Activated CD4-positive, alpha-beta T cell treated with anti-CD3 and anti-CD28 coated beads for 36 hours (primary cell): ENCODE measurements at regions of chr19 and their contacts with region 1.

Region 1: DNA sequence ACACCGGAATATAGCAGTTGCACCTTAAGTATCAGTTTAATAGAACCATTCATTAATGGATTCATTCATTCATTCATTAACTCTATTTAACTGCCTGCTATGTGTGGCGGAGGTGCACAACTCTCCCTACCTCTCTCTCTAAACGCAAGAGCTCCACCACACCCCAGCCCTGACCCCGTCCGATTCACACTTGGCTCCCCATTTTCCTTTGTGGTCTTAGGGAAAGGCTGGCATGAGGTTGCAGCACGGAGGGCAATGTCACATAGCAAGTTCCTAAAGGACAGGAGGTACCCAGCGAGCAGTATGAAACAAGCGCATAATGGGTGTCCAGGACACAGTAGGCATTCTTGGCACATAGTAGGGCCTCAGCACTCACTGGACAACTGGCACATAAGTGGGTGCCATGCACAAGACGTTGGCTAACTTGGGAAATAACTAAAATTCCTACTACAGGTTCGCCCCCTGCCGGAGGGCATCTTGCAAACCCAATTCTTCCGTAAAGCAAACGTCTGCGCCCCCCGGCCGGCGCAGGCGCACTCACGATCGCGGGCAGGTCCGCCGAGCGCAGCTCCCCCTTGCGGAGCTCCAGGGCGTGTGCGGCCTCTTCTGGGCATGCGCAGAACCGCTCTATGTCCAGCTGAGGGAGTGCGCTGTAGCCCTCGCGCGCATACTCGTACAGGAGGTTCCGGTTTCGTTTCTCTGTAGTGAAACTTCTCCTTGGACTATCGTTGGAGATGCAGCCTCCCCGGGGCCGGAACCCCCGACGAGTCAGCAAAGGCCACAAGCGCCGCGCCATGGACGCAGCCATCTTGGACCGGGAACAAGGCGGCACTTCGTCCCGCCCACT is at the start of gene SARS2:
- DNase-seq: peak; percentile 95
- ATAC-seq: peak; percentile 69
- H3K4me3 Mint-ChIP-seq: peak within 1 kb of the TSS; percentile 81
- H3K27ac Mint-ChIP-seq: peak within 1 kb of the TSS; percentile 92
- H3K4me1 Mint-ChIP-seq: peaks cover 28% of the 10 kb centered on the region
- H3K27me3 Mint-ChIP-seq: no peaks in the 10 kb centered on the region
- total RNA-seq, gene SARS2: 36.7 to 39.4 TPM

Region 2: DNA sequence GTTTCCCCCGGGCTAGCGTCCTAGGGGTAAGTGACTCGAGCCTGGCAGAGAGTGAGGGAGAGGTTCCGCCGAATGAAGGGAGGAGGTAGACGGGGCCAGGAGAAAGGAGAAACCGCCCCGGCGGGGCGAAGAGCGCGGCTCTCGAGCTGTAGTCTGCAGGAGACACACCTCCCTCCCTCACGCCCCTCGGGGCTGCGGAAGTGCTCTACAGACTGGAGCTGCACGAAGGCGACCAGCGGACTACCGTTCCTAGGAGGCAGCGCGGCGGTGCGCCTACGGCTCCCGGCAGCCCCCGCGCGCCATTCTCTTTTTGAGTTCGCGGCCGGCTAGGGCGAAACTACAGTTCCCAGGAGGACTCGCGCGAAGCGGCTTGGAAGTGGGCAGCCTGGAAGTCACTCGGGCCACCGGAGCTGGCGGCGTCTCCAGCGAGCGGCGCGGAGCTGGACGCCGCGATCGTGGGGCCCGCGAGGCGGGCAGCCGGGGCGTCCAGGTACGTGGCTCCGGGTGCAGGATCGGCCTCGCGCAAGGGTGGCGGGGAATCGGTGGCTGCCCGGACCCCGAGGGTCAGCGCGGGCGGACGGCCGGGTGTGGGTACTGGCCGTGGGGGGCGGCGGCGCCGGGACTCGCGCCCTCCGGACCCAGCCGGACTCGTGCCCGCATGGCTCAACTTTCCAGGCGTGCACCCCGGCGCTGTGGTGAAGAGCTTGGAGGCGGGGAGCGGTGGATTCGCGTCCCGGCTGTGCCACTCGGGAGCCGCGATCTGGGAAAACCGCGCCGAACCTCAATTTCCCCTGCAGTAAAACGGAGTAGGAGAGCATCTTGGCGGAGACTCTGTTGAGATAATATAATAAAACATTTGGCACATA is 1023.0 kb before region 1 on chr19 and contains the start of gene SIPA1L3:
- CTCF ChIA-PET with region 1: no interaction called
- POLR2A ChIA-PET with region 1: no interaction called
- intact Hi-C with region 1: loop called in 1 of 2 experiments (anchors 1 kb)
- DNase-seq: peak; percentile 97
- ATAC-seq: peak; percentile 98
- H3K4me3 Mint-ChIP-seq: peak within 1 kb of the TSS; percentile 73
- H3K27ac Mint-ChIP-seq: peak within 1 kb of the TSS; percentile 74
- H3K4me1 Mint-ChIP-seq: peaks cover 20% of the 10 kb centered on the region
- H3K27me3 Mint-ChIP-seq: no peaks in the 10 kb centered on the region
- total RNA-seq, gene SIPA1L3: 10.5 to 18.3 TPM

Region 3: GRCh38 chr19:38514812-38515633 is 415.1 kb before region 1 on chr19:
- CTCF ChIA-PET with region 1: interaction called, 3 read pairs
- POLR2A ChIA-PET with region 1: no interaction called
- intact Hi-C with region 1: loop called in 1 of 2 experiments (anchors 1 kb)
- DNase-seq: peak; percentile 88
- ATAC-seq: peak; percentile 96
- H3K4me3 Mint-ChIP-seq: no peak overlapping the region
- H3K27ac Mint-ChIP-seq: peak overlapping the region; percentile 42
- H3K4me1 Mint-ChIP-seq: peaks cover 16% of the 10 kb centered on the region
- H3K27me3 Mint-ChIP-seq: no peaks in the 10 kb centered on the region

Region 4: GRCh38 chr19:38707512-38708114 is 222.5 kb before region 1 on chr19:
- CTCF ChIA-PET with region 1: no interaction called
- POLR2A ChIA-PET with region 1: no interaction called
- intact Hi-C with region 1: no loop called
- DNase-seq: no peak
- ATAC-seq: no peak
- H3K4me3 Mint-ChIP-seq: no peak overlapping the region
- H3K27ac Mint-ChIP-seq: no peak overlapping the region
- H3K4me1 Mint-ChIP-seq: no peaks in the 10 kb centered on the region
- H3K27me3 Mint-ChIP-seq: no peaks in the 10 kb centered on the region

Region 5: DNA sequence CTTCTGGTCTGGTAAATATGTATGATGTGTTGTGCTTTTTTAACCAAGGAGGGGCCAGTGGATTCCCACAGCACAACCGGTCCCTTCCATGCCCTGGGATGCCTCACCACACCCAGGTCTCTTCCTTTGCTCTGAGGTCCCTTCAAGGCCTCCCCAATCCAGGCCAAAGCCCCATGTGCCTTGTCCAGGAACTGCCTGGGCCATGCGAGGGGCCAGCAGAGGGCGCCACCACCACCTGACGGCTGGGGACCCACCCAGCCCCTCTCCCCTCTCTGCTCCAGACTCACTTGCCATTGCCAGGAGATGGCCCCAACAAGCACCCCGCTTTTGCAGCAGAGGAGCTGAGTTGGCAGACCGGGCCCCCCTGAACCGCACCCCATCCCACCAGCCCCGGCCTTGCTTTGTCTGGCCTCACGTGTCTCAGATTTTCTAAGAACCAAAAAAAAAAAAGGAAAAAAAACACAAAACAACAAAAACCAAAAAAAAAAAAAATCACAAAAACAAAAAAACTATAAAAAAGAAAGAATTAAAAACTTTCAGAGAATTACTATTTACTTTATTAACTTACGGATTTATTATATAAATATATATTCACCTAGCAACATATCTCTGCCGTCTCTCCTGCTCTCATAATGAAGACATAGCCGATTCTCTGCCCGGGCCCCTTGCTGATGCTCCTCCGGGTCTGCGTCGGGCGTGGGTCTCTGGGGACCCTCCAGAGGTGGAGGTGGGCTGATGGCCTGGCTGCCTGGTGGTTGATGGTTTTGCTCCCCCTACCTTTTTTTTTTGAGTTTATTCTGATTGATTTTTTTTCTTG is 200.3 kb before region 1 on chr19:
- CTCF ChIA-PET with region 1: interaction called, 10 read pairs
- POLR2A ChIA-PET with region 1: no interaction called
- intact Hi-C with region 1: loop called (anchors 1 to 5 kb)
- DNase-seq: peak; percentile 92
- ATAC-seq: peak; percentile 82
- H3K4me3 Mint-ChIP-seq: no peak overlapping the region
- H3K27ac Mint-ChIP-seq: peak overlapping the region; percentile 60
- H3K4me1 Mint-ChIP-seq: peaks cover 18% of the 10 kb centered on the region
- H3K27me3 Mint-ChIP-seq: no peaks in the 10 kb centered on the region

Region 6: GRCh38 chr19:38869856-38870607 is 60.1 kb before region 1 on chr19:
- CTCF ChIA-PET with region 1: interaction called, 9 read pairs
- POLR2A ChIA-PET with region 1: no interaction called
- intact Hi-C with region 1: loop called in 1 of 2 experiments (anchors 1 kb)
- DNase-seq: peak; percentile 94
- ATAC-seq: peak; percentile 85
- H3K4me3 Mint-ChIP-seq: peak overlapping the region; percentile 76
- H3K27ac Mint-ChIP-seq: peak overlapping the region; percentile 86
- H3K4me1 Mint-ChIP-seq: peaks cover 37% of the 10 kb centered on the region
- H3K27me3 Mint-ChIP-seq: no peaks in the 10 kb centered on the region

Region 7: GRCh38 chr19:38949580-38950367 is 19.6 kb after region 1 on chr19:
- CTCF ChIA-PET with region 1: interaction called, 7 read pairs
- POLR2A ChIA-PET with region 1: no interaction called
- intact Hi-C with region 1: loop called in 1 of 2 experiments (anchors 1 kb)
- DNase-seq: peak; percentile 96
- ATAC-seq: peak; percentile 94
- H3K4me3 Mint-ChIP-seq: peak overlapping the region; percentile 16
- H3K27ac Mint-ChIP-seq: no peak overlapping the region
- H3K4me1 Mint-ChIP-seq: peaks cover 14% of the 10 kb centered on the region
- H3K27me3 Mint-ChIP-seq: peaks cover 15% of the 10 kb centered on the region

Region 8: DNA sequence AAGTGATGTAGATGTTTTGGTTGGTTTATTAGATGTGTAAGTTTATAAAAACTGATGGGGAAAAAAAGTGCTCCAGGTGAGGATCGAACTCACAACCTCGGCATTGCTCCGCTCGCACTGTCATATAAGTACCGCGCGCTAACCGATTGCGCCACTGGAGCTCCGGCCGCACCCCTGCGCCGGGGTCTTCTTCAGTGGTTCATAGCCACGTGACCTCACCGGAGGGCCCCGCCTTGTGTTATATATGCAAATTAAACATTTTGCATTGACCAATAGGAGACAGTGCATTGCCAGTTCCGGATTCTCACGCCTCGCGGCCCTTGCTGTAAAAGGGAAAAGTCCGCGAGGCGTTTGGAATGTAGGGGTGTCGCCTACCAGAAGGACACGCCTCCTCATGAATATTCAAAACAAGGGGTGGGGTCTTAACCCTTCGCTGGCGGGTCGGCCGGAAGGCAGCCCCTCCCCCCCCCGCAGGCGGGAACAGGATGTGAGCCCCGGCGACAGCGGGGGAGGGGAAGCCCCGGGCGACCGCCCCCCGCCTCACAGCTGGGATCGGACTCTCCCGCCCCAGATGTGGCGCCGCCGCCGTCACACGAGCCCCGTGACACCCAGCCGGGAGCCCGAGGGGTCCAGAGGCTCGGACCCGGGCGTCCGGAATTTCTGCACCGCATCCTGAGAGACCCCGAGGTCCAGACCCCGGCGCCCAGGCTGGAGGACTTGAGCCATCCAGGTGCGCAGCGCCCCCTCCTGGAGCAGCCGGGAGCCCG is 482.1 kb after region 1 on chr19 and contains the start of gene PLEKHG2:
- CTCF ChIA-PET with region 1: no interaction called
- POLR2A ChIA-PET with region 1: no interaction called
- intact Hi-C with region 1: loop called in 1 of 2 experiments (anchors 2 kb)
- DNase-seq: peak; percentile 98
- ATAC-seq: peak; percentile 73
- H3K4me3 Mint-ChIP-seq: peak within 1 kb of the TSS; percentile 73
- H3K27ac Mint-ChIP-seq: peak within 1 kb of the TSS; percentile 92
- H3K4me1 Mint-ChIP-seq: peaks cover 32% of the 10 kb centered on the region
- H3K27me3 Mint-ChIP-seq: no peaks in the 10 kb centered on the region
- total RNA-seq, gene PLEKHG2: 46.0 to 65.5 TPM